K562 (cell line): ENCODE measurements at regions of chr14 and their contacts with region 1.

Region 1: GRCh38 chr14:105659960-105660476 is 133.6 kb downstream of the TMEM121 start:
- DNase-seq: no peak
- ATAC-seq: no peak
- H3K4me3 ChIP-seq: no peak overlapping the region
- H3K27ac ChIP-seq: no peak overlapping the region
- H3K4me1 ChIP-seq: no peaks in the 10 kb centered on the region
- H3K27me3 ChIP-seq: no peaks in the 10 kb centered on the region
- CTCF ChIP-seq: no peak
- EP300 ChIP-seq: no peak
- POLR2A ChIP-seq: no peak
- RAD21 ChIP-seq: no peak

Region 2: GRCh38 chr14:105430535-105430934 is 229.5 kb before region 1 on chr14:
- CTCF ChIA-PET with region 1: no interaction called
- POLR2A ChIA-PET with region 1: no interaction called
- in situ Hi-C with region 1: no loop called
- intact Hi-C with region 1: no loop called
- DNase-seq: no peak
- ATAC-seq: no peak
- H3K4me3 ChIP-seq: no peak overlapping the region
- H3K27ac ChIP-seq: no peak overlapping the region
- H3K4me1 ChIP-seq: peaks cover 0 to 16% of the 10 kb centered on the region in 2 experiments; a peak in 2 of 5 replicates
- H3K27me3 ChIP-seq: no peaks in the 10 kb centered on the region
- CTCF ChIP-seq: no peak
- EP300 ChIP-seq: no peak
- POLR2A ChIP-seq: no peak
- RAD21 ChIP-seq: no peak

Region 3: GRCh38 chr14:105617201-105617777 is 42.7 kb before region 1 on chr14:
- CTCF ChIA-PET with region 1: no interaction called
- POLR2A ChIA-PET with region 1: no interaction called
- in situ Hi-C with region 1: loop called (anchors 5 kb)
- intact Hi-C with region 1: no loop called
- DNase-seq: no peak
- ATAC-seq: no peak
- H3K4me3 ChIP-seq: no peak overlapping the region
- H3K27ac ChIP-seq: no peak overlapping the region
- H3K4me1 ChIP-seq: no peaks in the 10 kb centered on the region
- H3K27me3 ChIP-seq: no peaks in the 10 kb centered on the region
- CTCF ChIP-seq: no peak
- EP300 ChIP-seq: no peak
- POLR2A ChIP-seq: no peak
- RAD21 ChIP-seq: no peak

Region 4: DNA sequence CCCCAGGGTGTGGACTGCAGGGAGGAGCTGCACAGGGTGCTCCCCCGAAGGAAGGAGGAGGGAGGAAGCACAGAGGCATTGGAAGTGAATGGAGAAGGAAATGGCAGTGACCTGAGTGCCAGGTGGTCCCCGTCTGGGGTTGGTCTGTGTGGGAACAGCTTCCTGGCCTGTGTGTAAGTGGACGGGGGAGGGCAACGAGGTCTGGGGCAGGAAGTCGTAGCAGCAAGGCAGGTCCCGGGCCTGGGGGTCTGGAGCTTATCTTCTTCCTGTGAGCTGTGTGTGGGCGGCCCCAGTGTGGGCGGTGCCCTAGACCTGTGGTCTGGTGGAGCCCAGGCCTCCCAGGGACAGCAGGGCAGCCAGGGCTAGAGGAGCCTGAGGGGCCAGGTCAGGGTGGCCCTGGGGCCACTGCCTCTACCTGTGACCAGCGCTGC is 248.5 kb after region 1 on chr14:
- CTCF ChIA-PET with region 1: no interaction called
- POLR2A ChIA-PET with region 1: no interaction called
- in situ Hi-C with region 1: no loop called
- intact Hi-C with region 1: no loop called
- DNase-seq: no peak
- ATAC-seq: no peak
- H3K4me3 ChIP-seq: no peak overlapping the region
- H3K27ac ChIP-seq: no peak overlapping the region
- H3K4me1 ChIP-seq: no peaks in the 10 kb centered on the region
- H3K27me3 ChIP-seq: no peaks in the 10 kb centered on the region
- CTCF ChIP-seq: no peak
- EP300 ChIP-seq: no peak
- POLR2A ChIP-seq: no peak
- RAD21 ChIP-seq: no peak